ENCODE measurements at regions of chr1 and their contacts with region 1.

Region 1: GRCh38 chr1:19485362-19486187 is at the start of gene CAPZB:
- DNase-seq: peak; percentile 95
- ATAC-seq: peak; percentile 89
- H3K4me3 Mint-ChIP-seq: peak within 1 kb of the TSS; percentile 95
- H3K27ac Mint-ChIP-seq: peak within 1 kb of the TSS; percentile 95
- H3K4me1 Mint-ChIP-seq: peaks cover 59% of the 10 kb centered on the region
- H3K27me3 Mint-ChIP-seq: no peaks in the 10 kb centered on the region
- CTCF ChIP-seq: no peak
- total RNA-seq, gene CAPZB: 335 to 340 TPM

Region 2: GRCh38 chr1:19341201-19342072 is 144.1 kb before region 1 on chr1:
- CTCF ChIA-PET with region 1: interaction called, 11 read pairs
- POLR2A ChIA-PET with region 1: no interaction called
- intact Hi-C with region 1: no loop called
- DNase-seq: peak; percentile 88
- ATAC-seq: peak; percentile 86
- H3K4me3 Mint-ChIP-seq: no peak overlapping the region
- H3K27ac Mint-ChIP-seq: peak overlapping the region; percentile 57
- H3K4me1 Mint-ChIP-seq: peaks cover 15% of the 10 kb centered on the region
- H3K27me3 Mint-ChIP-seq: no peaks in the 10 kb centered on the region
- CTCF ChIP-seq: peak; percentile 92

Region 3: GRCh38 chr1:19468397-19468956 is 17.1 kb before region 1 on chr1:
- CTCF ChIA-PET with region 1: interaction called, 5 read pairs
- POLR2A ChIA-PET with region 1: interaction called, 213 read pairs
- intact Hi-C with region 1: no loop called
- DNase-seq: peak; percentile 85
- ATAC-seq: peak; percentile 84
- H3K4me3 Mint-ChIP-seq: peak overlapping the region; percentile 59
- H3K27ac Mint-ChIP-seq: peak overlapping the region; percentile 94
- H3K4me1 Mint-ChIP-seq: peaks cover 88% of the 10 kb centered on the region
- H3K27me3 Mint-ChIP-seq: no peaks in the 10 kb centered on the region
- CTCF ChIP-seq: no peak

Region 4: GRCh38 chr1:19504796-19505692 is 19.5 kb after region 1 on chr1:
- CTCF ChIA-PET with region 1: interaction called, 10 read pairs
- POLR2A ChIA-PET with region 1: interaction called, 3 read pairs
- intact Hi-C with region 1: no loop called
- DNase-seq: no peak
- ATAC-seq: no peak
- H3K4me3 Mint-ChIP-seq: no peak overlapping the region
- H3K27ac Mint-ChIP-seq: no peak overlapping the region
- H3K4me1 Mint-ChIP-seq: peaks cover 33% of the 10 kb centered on the region
- H3K27me3 Mint-ChIP-seq: peaks cover 3% of the 10 kb centered on the region
- CTCF ChIP-seq: no peak

Region 5: GRCh38 chr1:19596714-19597495 is 111.3 kb after region 1 on chr1:
- CTCF ChIA-PET with region 1: interaction called, 4 read pairs
- POLR2A ChIA-PET with region 1: interaction called, 19 read pairs
- intact Hi-C with region 1: loop called (anchors 5 kb)
- DNase-seq: peak; percentile 99
- ATAC-seq: peak; percentile 87
- H3K4me3 Mint-ChIP-seq: peak overlapping the region; percentile 84
- H3K27ac Mint-ChIP-seq: peak overlapping the region; percentile 99
- H3K4me1 Mint-ChIP-seq: peaks cover 42% of the 10 kb centered on the region
- H3K27me3 Mint-ChIP-seq: no peaks in the 10 kb centered on the region
- CTCF ChIP-seq: no peak

Measured in activated CD8-positive, alpha-beta T cell treated with anti-CD3 and anti-CD28 coated beads for 36 hours (primary cell).